Vagina (tissue), 2 donors: ENCODE measurements at regions of chr11 and their contacts with region 1.

Region 1: DNA sequence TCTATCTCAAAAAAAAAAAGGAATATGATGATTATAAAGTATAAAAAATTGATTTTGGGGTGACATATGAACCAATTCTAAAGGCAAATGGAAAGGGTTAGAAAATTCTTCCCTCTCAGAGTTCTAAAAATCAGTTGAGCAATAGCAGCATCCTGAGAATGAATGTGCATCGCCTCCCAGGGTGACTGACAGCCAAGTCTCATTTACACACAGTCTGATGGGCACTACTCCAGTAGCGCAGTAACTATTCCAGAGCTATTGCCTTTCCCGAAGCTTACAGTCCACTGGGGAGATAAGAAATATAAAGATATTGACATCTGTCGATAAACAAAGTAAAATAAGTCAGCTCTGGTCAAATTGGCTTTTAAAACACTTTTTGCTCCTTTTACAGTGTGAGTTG is 32.3 kb upstream of the SORL1 start:
- DNase-seq: no peak
- H3K4me3 ChIP-seq: no peak overlapping the region
- H3K27ac ChIP-seq: no peak overlapping the region
- H3K4me1 ChIP-seq: peaks cover 23% of the 10 kb centered on the region
- H3K27me3 ChIP-seq: no peaks in the 10 kb centered on the region
- CTCF ChIP-seq: no peak
- POLR2A ChIP-seq: no peak

Region 2: DNA sequence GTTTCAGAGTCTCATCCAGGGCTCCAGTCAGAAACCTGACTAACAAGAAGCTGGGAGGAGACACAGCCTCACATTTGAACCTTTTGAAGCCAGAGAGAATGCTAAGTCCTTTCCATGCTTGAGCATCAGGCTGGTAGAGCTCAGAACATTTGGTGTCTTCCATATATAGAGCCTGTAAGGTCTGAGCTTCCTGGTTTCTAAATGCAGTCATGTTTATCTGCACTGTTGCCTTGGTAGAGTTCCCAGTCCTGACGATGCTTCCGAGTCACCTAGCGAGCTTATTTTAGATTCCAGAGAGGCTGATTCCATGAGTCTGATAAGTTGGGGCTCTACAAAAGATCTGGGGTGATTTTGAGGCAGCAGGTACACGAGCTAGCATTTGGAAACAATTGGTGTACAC is 36.1 kb before region 1 on chr11:
- intact Hi-C with region 1: loop called (anchors 1 kb)
- DNase-seq: no peak
- H3K4me3 ChIP-seq: no peak overlapping the region
- H3K27ac ChIP-seq: no peak overlapping the region
- H3K4me1 ChIP-seq: peaks cover under 1% of the 10 kb centered on the region
- H3K27me3 ChIP-seq: no peaks in the 10 kb centered on the region
- CTCF ChIP-seq: no peak
- POLR2A ChIP-seq: no peak